AG04450 (cell line): ENCODE measurements at regions of chr17 and their contacts with region 1.

Region 1: GRCh38 chr17:15456972-15457722 is 10.3 kb downstream of the CDRT4 start:
- DNase-seq: peak; percentile 80
- H3K4me3 ChIP-seq: no peak overlapping the region; the same call in 1 of the 2 replicates
- H3K27ac ChIP-seq: peak overlapping the region; percentile 80
- H3K27me3 ChIP-seq: no peaks in the 10 kb centered on the region
- CTCF ChIP-seq: peak; percentile 70

Region 2: GRCh38 chr17:15257258-15257788 is 199.8 kb before region 1 on chr17:
- CTCF ChIA-PET with region 1: interaction called, 23 read pairs
- POLR2A ChIA-PET with region 1: interaction called, 13 read pairs
- DNase-seq: peak; percentile 38
- H3K4me3 ChIP-seq: peak overlapping the region; percentile 36
- H3K27ac ChIP-seq: no peak overlapping the region
- H3K27me3 ChIP-seq: no peaks in the 10 kb centered on the region
- CTCF ChIP-seq: peak; percentile 90

Region 3: DNA sequence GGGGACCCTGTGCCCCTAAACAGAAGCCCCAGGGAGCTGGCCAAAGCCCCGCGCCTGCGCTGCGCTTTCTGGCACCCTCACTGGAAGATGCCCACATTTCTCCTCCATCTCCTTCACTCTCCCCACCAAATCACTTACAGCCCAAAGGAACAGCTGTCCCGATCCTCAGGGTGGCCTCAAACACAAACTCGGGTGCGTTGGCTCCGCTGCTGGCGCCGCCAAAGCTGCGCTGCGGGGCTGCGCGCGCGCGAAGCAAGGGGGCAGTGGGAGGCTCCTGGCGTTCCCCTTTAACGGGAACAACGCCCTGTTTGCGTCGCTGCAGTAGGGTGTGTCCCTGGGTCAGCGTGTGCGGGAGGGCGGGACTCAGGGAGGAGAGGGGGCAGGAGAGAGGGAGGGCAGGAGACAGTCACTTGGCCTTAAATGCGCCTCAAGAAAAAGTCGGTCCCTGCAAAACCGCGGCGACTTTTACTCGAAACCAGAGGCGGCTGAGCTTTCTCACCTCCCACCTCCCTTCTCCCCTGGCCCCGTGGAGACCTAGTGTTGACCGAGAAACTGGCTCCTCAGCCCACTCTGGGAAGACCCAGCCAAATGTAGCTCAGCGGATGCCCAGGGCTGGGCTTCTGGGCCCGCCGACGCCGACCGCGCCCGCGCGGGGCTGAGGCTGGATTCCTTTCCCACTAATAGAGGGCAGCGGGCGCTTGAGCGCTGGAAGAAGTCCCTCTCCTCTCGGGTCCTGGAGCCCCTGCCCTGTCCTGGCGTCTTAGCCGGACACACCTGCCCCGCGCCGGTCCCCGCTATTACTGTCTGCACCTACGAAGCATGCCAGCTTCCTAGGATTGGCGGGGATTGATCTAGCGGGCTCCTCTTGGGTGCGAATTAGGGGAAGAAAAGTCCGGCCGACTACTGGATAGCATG is 194.6 kb before region 1 on chr17:
- CTCF ChIA-PET with region 1: interaction called, 23 read pairs
- POLR2A ChIA-PET with region 1: interaction called, 13 read pairs
- DNase-seq: peak; percentile 73
- H3K4me3 ChIP-seq: peak overlapping the region; percentile 88
- H3K27ac ChIP-seq: peak overlapping the region; percentile 93
- H3K27me3 ChIP-seq: peaks cover 7% of the 10 kb centered on the region
- CTCF ChIP-seq: peak; percentile 43

Region 4: GRCh38 chr17:15321556-15322251 is 135.4 kb before region 1 on chr17:
- CTCF ChIA-PET with region 1: no interaction called
- POLR2A ChIA-PET with region 1: no interaction called
- DNase-seq: peak; percentile 34
- H3K4me3 ChIP-seq: no peak overlapping the region
- H3K27ac ChIP-seq: no peak overlapping the region
- H3K27me3 ChIP-seq: no peaks in the 10 kb centered on the region
- CTCF ChIP-seq: no peak

Region 5: DNA sequence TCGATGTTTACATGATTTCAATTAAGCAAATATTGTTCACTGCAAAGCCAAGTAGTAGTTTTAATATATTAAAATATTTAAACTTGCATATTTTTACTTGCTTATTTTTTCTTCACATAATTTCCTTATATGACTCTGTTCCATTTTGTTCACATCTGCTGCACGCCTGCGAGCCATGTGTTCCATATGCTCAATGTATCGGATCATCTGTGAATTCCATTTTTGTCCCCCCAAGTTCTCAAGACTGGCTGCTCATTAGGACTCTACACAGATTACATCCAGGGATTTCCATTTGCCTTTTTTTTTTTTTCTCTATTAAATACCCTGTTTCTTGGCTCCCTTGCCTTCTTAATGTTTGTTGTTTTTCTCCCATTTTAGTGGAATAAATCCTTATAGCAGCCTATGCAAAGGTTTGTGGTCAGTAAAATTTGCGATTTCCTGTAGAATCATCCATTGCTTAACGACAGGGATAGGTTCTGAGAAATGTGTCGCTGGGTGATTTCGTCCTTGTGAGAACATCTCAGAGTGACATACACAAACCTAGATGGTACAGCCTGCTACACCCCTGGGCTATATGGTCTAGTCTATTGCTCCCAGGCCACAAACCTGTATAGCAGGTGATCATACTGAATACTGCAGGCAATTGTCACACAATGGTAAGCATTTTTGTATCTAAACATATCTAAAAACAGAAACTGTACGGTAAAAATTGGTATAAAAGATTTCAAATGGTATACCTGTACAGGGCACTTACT is 85.6 kb before region 1 on chr17:
- CTCF ChIA-PET with region 1: no interaction called
- POLR2A ChIA-PET with region 1: no interaction called
- DNase-seq: no peak
- H3K4me3 ChIP-seq: no peak overlapping the region
- H3K27ac ChIP-seq: no peak overlapping the region
- H3K27me3 ChIP-seq: no peaks in the 10 kb centered on the region
- CTCF ChIP-seq: no peak

Region 6: DNA sequence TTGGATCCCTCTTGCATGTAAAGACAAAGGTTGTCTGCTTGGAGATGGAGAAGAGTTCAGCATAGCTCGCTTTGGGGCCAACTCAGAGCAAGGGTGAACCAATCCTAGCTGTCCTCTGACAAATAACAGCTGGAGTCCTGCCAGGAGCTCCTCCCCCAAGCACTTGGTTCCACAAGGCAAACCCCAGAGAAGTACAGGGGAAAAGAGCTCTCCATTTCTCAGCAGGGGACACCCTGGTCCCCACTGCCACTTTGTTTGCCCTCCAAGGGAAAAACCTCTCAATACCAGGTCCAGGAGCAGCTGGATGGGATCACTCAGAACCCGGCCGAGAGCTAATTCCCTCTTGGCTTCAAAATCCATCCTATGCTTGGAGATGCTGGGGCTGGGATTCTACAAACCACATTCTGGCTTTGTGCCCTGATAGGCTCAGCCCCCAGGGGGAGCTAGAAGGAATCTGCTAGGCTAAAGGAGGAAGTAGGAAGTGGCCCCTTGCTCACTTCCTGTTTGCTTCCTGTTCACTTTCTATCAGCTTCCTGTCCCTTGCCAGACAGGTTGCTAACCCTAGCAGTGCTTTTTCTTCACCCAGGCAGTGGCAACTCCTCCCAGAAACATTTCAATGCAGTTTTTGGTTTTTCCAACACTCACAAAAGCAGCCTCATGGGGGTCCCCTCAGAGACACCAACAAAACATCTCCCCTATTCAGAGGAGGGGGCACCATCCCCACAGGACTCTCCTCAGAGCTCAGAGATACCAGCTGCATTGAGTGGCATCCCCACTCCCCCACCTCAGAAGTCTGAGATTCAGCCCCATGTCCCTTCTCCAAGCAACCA is 20.5 kb before region 1 on chr17:
- CTCF ChIA-PET with region 1: interaction called, 9 read pairs
- POLR2A ChIA-PET with region 1: interaction called, 13 read pairs
- DNase-seq: peak; percentile 13
- H3K4me3 ChIP-seq: no peak overlapping the region
- H3K27ac ChIP-seq: peak overlapping the region; percentile 24
- H3K27me3 ChIP-seq: no peaks in the 10 kb centered on the region
- CTCF ChIP-seq: peak; percentile 51

Region 7: GRCh38 chr17:16298140-16298662 is 841.1 kb after region 1 on chr17:
- CTCF ChIA-PET with region 1: interaction called, 12 read pairs
- POLR2A ChIA-PET with region 1: no interaction called
- DNase-seq: no peak
- H3K4me3 ChIP-seq: no peak overlapping the region
- H3K27ac ChIP-seq: no peak overlapping the region
- H3K27me3 ChIP-seq: no peaks in the 10 kb centered on the region
- CTCF ChIP-seq: no peak